Left cardiac atrium (tissue), 4 donors: ENCODE measurements at regions of chr20 and their contacts with region 1.

Region 1: DNA sequence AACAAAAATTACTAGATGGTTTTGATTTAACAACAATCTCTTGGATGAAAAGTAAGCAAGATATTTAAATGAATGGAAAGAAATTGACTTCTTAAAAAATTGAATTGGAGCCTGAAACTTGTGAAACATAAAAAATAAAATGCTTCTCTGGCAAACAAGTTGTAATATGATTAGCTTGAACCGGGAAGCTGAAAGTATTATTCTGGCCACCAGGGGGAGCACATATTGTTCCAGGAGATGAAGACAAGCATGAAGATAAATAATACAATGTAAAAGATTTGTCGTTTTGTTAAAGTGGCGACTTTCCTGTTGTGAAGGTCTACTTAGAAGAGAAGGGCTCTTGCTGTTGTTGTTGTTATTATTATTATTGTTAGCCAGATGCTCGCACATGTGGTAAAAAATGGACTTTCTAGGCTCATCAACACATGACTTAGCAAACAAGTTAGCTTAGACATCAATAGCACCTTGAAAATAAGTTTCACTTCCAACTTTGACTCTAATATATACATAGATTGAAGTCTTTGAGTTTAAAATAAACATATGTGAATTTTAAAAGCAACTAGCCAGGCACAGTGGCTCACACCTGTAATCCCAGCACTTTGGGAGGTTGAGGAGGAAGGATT is 14.2 kb downstream of the PAX1 start:
- DNase-seq: no peak
- ATAC-seq: no peak

Region 2: DNA sequence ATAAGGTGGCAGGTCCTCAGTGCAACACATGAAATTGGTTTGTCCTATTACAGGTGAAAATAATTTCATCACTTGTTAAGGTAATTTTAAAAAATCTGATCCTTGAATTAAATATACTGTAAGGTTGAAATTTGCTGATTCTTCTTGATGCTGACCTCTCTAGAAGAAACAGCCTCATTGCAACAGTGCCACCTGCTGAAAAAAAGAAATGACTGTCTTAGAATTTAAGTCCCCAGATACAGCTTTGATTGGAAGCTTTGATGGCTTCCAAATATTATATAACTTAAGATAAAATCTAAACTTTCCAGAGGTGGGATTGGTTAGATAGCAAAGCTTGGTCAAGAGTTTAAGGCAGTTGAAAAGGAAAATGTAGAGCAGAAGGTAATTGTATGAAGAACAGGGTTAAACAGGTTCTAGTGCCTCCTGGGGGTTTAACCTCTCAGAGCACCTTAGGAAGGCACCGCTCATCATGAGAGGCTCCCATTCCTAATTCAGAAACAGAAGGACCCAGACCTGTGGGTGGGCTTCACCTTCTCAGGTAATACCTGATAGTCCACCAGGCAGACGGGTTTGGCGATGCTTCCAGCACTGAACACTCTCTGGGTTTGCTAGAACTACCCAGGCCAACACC is 386.7 kb after region 1 on chr20:
- intact Hi-C with region 1: loop called in 1 of 2 experiments (anchors 10 kb)
- DNase-seq: no peak
- ATAC-seq: peak in 1 of 2 donors; percentile 44

Region 3: GRCh38 chr20:22248051-22248667 is 528.5 kb after region 1 on chr20:
- intact Hi-C with region 1: loop called in 1 of 2 experiments (anchors 10 kb)
- DNase-seq: no peak
- ATAC-seq: no peak

Region 4: DNA sequence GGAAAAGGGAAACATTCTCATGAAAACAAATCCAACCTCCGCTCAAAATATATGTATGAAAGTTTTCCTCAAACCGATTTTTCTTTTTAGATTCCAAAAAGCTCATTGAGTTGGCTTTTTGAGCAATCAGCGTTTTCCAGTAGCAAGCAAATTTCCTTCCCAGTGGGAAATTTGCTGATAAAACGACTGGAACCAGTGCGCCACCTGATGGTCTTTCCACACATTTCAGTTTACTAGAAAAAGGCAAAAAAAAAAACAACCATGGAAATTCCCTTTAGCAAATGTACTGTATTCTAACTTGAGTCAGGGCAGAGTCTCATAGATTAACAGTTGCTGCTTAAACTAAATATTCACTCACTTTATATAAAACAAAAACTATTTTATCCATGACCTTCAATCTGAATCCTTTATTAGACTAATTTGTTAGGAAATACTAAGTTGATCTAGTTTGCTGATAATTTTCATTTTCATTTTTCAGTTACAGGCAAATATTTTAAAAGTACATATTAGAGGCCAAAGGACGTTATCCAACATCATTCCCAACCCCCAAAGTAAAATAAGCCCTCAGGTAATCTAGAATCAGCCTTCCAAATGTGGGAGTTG is 593.1 kb after region 1 on chr20:
- intact Hi-C with region 1: loop called in 1 of 2 experiments (anchors 5 kb)
- DNase-seq: peak; percentile 31
- ATAC-seq: no peak

Region 5: GRCh38 chr20:22684072-22684762 is 964.5 kb after region 1 on chr20:
- intact Hi-C with region 1: loop called in 1 of 2 experiments (anchors 5 kb)
- DNase-seq: peak; percentile 61
- ATAC-seq: peak; percentile 74 to 79